ENCODE measurements at regions of chr4 and their contacts with region 1.

Region 1: DNA sequence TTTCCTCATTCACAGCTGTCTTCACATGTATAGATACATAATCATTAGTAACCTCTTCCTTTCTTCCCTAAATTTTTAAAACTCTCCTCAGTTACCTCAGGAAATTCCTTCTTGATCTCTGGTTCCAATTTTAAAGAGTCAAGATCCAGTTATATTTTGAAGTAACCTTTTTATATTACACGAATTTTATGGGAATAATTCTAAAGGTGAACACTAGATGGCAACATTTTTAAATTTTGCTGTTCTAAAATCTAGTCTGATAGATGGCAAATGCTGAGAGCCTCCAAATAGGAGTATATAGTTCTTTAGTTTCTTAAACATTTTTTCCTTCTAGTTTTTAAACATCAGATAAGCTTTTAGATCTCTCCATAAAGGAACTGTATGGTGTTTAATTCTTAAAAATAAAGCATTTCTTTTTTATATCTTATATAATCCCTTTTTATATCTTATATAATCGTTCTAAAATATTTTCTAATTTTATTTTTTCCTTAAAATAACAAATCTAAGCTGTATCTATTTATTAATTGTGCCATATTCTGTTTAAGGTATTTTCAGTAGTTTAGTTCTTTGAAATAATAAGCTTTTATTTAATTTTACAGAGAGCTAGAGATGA is 37.9 kb upstream of the PAPSS1 start:
- DNase-seq: no peak
- H3K4me3 Mint-ChIP-seq: no peak overlapping the region
- H3K27ac Mint-ChIP-seq: no peak overlapping the region
- H3K4me1 Mint-ChIP-seq: no peaks in the 10 kb centered on the region
- H3K27me3 Mint-ChIP-seq: peaks cover 14% of the 10 kb centered on the region

Region 2: DNA sequence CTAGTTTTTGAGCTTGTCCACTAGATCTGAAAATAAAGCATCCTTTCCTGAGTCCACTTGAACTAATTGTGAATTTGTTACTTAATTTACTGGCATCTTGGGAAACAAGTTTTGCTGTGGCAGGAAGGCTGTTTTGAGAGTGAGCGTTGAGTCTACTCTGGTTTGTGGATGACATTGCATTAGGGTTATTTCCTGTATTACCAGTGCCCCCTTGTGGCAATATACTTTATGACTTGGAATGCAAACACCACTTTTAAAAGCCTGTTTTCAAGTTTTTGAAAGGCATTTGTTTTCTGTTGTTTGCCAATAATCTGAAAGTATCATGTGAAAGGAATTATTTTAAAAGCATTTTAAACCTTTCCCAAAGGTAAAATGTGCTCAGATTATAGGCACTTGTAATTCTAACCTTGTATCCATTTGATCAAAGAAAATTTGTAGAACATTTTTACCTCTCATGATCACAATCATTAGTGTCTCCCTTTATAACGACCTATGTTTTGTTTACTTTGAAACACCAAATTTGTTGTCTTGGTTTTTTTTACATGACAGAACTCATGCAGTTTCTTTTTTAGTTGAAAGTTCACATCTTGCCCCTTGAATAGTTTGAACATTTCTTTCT is 155.4 kb after region 1 on chr4:
- intact Hi-C with region 1: loop called (anchors 1 kb)
- DNase-seq: peak; percentile 26
- H3K4me3 Mint-ChIP-seq: no peak overlapping the region
- H3K27ac Mint-ChIP-seq: no peak overlapping the region
- H3K4me1 Mint-ChIP-seq: no peaks in the 10 kb centered on the region
- H3K27me3 Mint-ChIP-seq: peaks cover 8% of the 10 kb centered on the region

Measured in activated T-helper 1 cell treated with anti-CD3 and anti-CD28 coated beads, Interleukin-12 subunit alpha, Interleukin-12 subunit beta, Interleukin-2, Interleukin-4 antibody, amounts not matched to agents 30 ng/mL and 10 ng/mL and 1 ng/mL, durations not matched to agents 14 hours and 24 hours and 36 hours (primary cell).